B cell (primary cell): ENCODE measurements at regions of chr5 and their contacts with region 1.

Region 1: GRCh38 chr5:124935065-124935464 is 188.6 kb upstream of the ZNF608 start:
- DNase-seq: peak; percentile 81
- ATAC-seq: peak; percentile 69
- H3K4me3 ChIP-seq: no peak overlapping the region
- H3K4me3 Mint-ChIP-seq: peak overlapping the region; percentile 17
- H3K27ac ChIP-seq: peak overlapping the region; percentile 45 to 65
- H3K27ac Mint-ChIP-seq: peak overlapping the region; percentile 84
- H3K4me1 ChIP-seq: peaks cover 15 to 19% of the 10 kb centered on the region in 2 donors
- H3K4me1 Mint-ChIP-seq: peaks cover 17% of the 10 kb centered on the region
- H3K27me3 ChIP-seq: no peaks in the 10 kb centered on the region
- H3K27me3 Mint-ChIP-seq: no peaks in the 10 kb centered on the region
- CTCF ChIP-seq: no peak

Region 2: GRCh38 chr5:124812754-124813358 is 122.2 kb before region 1 on chr5:
- CTCF ChIA-PET with region 1: no interaction called
- POLR2A ChIA-PET with region 1: no interaction called
- intact Hi-C with region 1: no loop called
- DNase-seq: no peak
- ATAC-seq: no peak
- H3K4me3 ChIP-seq: no peak overlapping the region
- H3K4me3 Mint-ChIP-seq: no peak overlapping the region
- H3K27ac ChIP-seq: no peak overlapping the region
- H3K27ac Mint-ChIP-seq: no peak overlapping the region
- H3K4me1 ChIP-seq: no peaks in the 10 kb centered on the region
- H3K4me1 Mint-ChIP-seq: no peaks in the 10 kb centered on the region
- H3K27me3 ChIP-seq: no peaks in the 10 kb centered on the region
- H3K27me3 Mint-ChIP-seq: no peaks in the 10 kb centered on the region
- CTCF ChIP-seq: no peak

Region 3: GRCh38 chr5:124920909-124921666 is 14.0 kb before region 1 on chr5:
- CTCF ChIA-PET with region 1: interaction called, 5 read pairs
- POLR2A ChIA-PET with region 1: no interaction called
- intact Hi-C with region 1: loop called (anchors 1 kb)
- DNase-seq: peak; percentile 77
- ATAC-seq: peak; percentile 80
- H3K4me3 ChIP-seq: peak overlapping the region; percentile 2 to 61 (median 36)
- H3K4me3 Mint-ChIP-seq: no peak overlapping the region
- H3K27ac ChIP-seq: peak overlapping the region; percentile 54 to 71
- H3K27ac Mint-ChIP-seq: no peak overlapping the region
- H3K4me1 ChIP-seq: peaks cover 29 to 30% of the 10 kb centered on the region in 2 donors
- H3K4me1 Mint-ChIP-seq: peaks cover 27% of the 10 kb centered on the region
- H3K27me3 ChIP-seq: no peaks in the 10 kb centered on the region
- H3K27me3 Mint-ChIP-seq: no peaks in the 10 kb centered on the region
- CTCF ChIP-seq: no peak

Region 4: DNA sequence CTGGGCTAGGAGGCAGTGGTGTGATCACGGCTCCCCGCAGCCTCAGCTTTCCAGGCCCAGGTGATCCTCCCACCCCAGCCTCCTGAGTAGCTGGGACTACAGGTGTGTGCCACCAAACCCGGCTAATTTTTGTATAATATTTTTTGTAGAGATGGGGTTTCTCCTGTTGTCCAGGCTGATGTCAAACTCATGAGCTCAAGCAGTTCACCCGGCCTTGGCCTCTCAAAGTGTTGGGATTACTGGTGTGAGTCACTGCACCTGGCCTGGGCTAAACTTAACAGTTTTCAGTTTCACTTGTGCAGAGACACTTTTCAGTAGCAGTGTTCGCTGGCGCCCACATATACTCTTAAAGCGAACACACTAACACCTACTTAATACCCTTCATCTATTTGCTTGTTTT is 17.0 kb after region 1 on chr5:
- CTCF ChIA-PET with region 1: interaction called, 3 read pairs
- POLR2A ChIA-PET with region 1: interaction called, 3 read pairs
- intact Hi-C with region 1: loop called (anchors 2 kb)
- DNase-seq: peak; percentile 48
- ATAC-seq: peak; percentile 74
- H3K4me3 ChIP-seq: peak overlapping the region in 3 of 5 experiments; percentile 1 to 27 (median 21)
- H3K4me3 Mint-ChIP-seq: peak overlapping the region; percentile 50
- H3K27ac ChIP-seq: peak overlapping the region; percentile 64 to 84
- H3K27ac Mint-ChIP-seq: peak overlapping the region; percentile 85
- H3K4me1 ChIP-seq: peaks cover 12 to 23% of the 10 kb centered on the region in 2 donors
- H3K4me1 Mint-ChIP-seq: peaks cover 13% of the 10 kb centered on the region
- H3K27me3 ChIP-seq: no peaks in the 10 kb centered on the region
- H3K27me3 Mint-ChIP-seq: no peaks in the 10 kb centered on the region
- CTCF ChIP-seq: no peak

Region 5: GRCh38 chr5:125011014-125011413 is 75.9 kb after region 1 on chr5:
- CTCF ChIA-PET with region 1: no interaction called
- POLR2A ChIA-PET with region 1: no interaction called
- intact Hi-C with region 1: no loop called
- DNase-seq: no peak
- ATAC-seq: no peak
- H3K4me3 ChIP-seq: no peak overlapping the region
- H3K4me3 Mint-ChIP-seq: no peak overlapping the region
- H3K27ac ChIP-seq: no peak overlapping the region
- H3K27ac Mint-ChIP-seq: no peak overlapping the region
- H3K4me1 ChIP-seq: peaks cover 30 to 37% of the 10 kb centered on the region in 2 donors
- H3K4me1 Mint-ChIP-seq: peaks cover 43% of the 10 kb centered on the region
- H3K27me3 ChIP-seq: no peaks in the 10 kb centered on the region
- H3K27me3 Mint-ChIP-seq: no peaks in the 10 kb centered on the region
- CTCF ChIP-seq: no peak